ENCODE measurements at regions of chr15 and their contacts with region 1.

Region 1: DNA sequence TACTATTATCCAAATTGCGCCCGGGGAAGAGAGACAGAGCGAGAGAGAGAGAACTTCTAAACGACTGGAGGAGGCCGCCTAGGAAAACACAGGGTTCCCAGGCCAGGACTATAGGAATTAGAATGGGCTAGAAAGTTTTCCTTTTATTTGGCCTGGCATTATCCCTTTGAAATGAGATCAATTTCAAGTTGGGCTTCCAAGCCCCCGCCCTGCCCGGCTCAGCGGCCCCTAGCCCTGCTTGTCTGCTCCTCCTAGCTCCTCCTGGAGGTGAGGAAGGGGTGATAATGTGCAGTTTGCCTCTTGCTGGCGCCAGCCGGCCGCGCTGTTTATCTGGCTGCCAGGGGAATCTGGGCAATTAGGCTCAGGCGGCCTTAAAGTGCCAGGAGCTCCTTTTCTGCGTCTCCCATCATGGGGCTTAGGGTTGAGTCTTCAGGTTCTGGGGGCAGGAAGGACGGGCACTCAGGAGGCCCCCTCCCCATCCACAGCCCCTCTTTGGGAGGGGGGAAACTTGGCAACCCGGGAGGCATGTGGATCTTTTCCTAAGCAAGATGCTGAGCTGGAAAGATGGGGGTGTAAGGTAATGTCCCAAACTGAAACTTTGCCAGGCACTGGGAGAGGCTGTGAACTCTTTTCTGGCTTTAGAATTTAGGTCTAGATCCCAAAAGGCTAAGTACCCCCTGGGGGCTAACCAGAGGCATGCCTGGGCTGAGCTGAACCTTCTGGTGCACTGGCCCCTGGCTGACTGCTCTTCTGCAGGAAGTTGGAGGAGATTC is 5.5 kb downstream of the SMAD6 start:
- DNase-seq: peak in 4 of 5 donors; percentile 39 to 66 (median 55)
- ATAC-seq: peak; percentile 9 to 59 (median 44)
- H3K4me3 ChIP-seq: peak overlapping the region in 10 of 12 donors; percentile 10 to 90 (median 68)
- H3K27ac ChIP-seq: peak overlapping the region in 11 of 12 donors; percentile 19 to 95 (median 81)
- H3K4me1 ChIP-seq: peaks cover 0 to 65% (median 37%) of the 10 kb centered on the region in 12 donors
- H3K27me3 ChIP-seq: peaks cover 0 to 25% (median 0%) of the 10 kb centered on the region in 9 donors
- CTCF ChIP-seq: peak in 5 of 12 donors; percentile 15 to 32 (median 25)
- POLR2A ChIP-seq: no peak

Region 2: DNA sequence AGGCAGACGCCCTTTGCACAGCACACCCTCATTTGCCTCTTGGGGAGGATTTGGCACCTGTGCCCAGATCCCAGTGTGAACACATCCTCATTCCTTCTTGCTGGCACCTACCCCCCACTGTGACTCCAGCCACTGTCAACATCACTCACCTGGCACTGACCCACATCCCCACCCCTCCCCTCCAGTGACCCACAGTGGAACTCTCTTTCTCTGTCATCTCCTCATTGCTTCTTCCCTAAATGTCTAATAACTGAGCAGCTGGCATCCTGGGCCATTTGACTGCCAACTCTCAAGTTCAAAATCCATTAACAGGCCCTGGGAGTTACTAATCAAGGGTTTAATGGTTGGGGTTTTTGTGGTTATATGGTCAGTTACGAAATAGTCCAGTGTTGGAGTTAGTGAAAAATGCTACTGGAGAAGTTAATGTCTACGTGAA is 224.3 kb before region 1 on chr15:
- intact Hi-C with region 1: no loop called
- DNase-seq: peak in 1 of 5 donors; percentile 52
- ATAC-seq: peak in 2 of 4 donors; percentile 41 to 70
- H3K4me3 ChIP-seq: no peak overlapping the region
- H3K27ac ChIP-seq: peak overlapping the region in 1 of 12 donors; percentile 52
- H3K4me1 ChIP-seq: peaks cover 0 to 7% (median 0%) of the 10 kb centered on the region in 12 donors
- H3K27me3 ChIP-seq: no peaks in the 10 kb centered on the region
- CTCF ChIP-seq: no peak
- POLR2A ChIP-seq: no peak

Region 3: DNA sequence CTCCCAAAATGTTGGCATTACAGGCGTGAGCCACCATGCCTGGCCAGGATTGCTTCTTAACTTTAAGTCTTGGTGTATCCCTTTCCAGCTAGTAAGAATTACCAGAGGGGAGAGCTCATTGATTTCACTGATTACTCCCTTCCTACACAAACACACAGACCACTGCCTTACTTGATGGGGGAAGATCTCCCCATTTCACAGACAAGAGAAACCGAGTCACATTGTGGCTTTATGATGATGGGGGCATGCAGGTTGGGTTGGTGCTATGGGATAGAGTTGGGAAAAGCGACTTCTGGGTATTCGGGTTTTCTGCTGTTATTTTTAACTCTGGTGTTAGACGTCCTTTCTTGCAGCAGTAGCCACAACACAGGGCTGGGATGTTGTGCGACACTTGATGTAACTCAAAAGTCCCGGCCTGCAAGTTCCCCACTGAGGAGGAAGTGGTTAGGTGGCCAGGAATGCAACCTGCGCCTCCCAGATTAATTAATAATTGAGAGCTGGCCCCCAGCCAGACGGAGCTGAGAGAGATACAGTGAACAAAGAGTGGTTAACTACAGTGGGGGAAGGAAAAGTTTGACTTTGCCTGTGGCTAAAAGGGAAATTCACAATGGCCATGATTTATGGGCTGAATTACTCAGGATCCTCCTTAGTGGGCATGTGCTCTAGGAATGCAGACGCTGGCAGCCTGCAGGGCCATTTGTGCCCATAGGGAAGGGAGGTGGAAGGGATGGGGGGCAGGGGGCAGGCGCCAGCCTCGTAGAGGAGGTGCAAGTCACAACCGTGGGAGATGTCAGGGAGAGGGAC is 58.2 kb after region 1 on chr15:
- intact Hi-C with region 1: loop called in 8 of 10 experiments (anchors 2 to 5 kb)
- DNase-seq: peak in 3 of 5 donors; percentile 43 to 56 (median 45)
- ATAC-seq: no peak
- H3K4me3 ChIP-seq: no peak overlapping the region
- H3K27ac ChIP-seq: peak overlapping the region in 8 of 12 donors; percentile 16 to 94 (median 50)
- H3K4me1 ChIP-seq: peaks cover 13 to 79% (median 63%) of the 10 kb centered on the region in 12 donors
- H3K27me3 ChIP-seq: peaks cover 0 to 5% (median 0%) of the 10 kb centered on the region in 9 donors
- CTCF ChIP-seq: no peak
- POLR2A ChIP-seq: no peak

Measured in heart left ventricle (tissue), 16 donors.